ENCODE measurements at regions of chr19 and their contacts with region 1.

Region 1: DNA sequence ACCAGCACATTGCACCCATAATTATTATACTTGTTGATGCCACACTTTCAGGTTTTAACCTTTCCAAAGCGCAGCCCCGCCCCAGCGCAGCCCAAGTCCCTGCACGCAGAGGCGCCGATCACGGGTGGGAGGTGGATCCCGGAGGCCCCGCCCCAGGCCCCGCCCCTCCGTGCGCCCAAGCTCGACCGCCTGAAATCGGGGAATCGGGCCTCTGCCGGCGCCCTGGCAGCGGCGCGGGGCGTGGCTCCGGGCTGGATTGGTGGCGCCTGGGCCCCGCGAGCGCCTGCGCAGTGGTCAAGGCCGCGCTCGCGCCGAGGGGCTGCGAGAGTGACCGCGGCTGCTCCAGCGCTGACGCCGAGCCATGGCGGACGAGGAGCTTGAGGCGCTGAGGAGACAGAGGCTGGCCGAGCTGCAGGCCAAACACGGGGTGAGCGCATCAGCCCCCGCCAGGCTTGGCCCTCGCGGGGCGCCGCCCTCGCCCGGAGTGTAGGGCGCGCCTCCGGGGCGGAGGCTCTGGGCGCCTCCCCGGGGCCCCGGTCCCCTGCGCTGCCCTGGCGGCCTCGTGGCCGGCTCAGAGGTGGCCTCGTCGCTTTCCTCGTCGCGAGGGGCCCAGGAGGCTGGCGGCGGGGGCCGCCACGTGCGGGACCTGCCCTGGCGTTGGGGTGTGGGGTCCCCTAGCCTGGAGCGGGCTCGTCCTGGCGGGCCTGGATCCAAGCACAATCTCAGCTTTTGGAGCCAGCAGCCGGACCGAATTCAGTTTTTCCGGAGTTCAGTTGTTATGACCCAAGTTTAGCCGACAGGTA is at the start of gene PDCD5:
- DNase-seq: peak; percentile 51
- ATAC-seq: peak; percentile 95
- H3K4me3 ChIP-seq: peak within 1 kb of the TSS; percentile 83
- H3K27ac ChIP-seq: peak within 1 kb of the TSS; percentile 71
- H3K4me1 ChIP-seq: 0 out of 2 replicates have a peak, but pooled peaks cover 5% of the 10 kb centered on the region
- H3K27me3 ChIP-seq: no peaks in the 10 kb centered on the region
- CTCF ChIP-seq: no peak
- EP300 ChIP-seq: no peak
- POLR2A ChIP-seq: peak; percentile 95
- RAD21 ChIP-seq: no peak
- polyA plus RNA-seq, gene PDCD5: 124 to 260 TPM

Region 2: GRCh38 chr19:32345261-32346207 is 235.6 kb before region 1 on chr19 and contains the start of gene ZNF507:
- CTCF ChIA-PET with region 1: no interaction called
- POLR2A ChIA-PET with region 1: interaction called, 3 read pairs
- RAD21 ChIA-PET with region 1: no interaction called
- SMC1A ChIA-PET with region 1: no interaction called
- in situ Hi-C with region 1: no loop called
- intact Hi-C with region 1: loop called (anchors 5 kb)
- DNase-seq: no peak
- ATAC-seq: peak; percentile 93
- H3K4me3 ChIP-seq: peak within 1 kb of the TSS; percentile 81
- H3K27ac ChIP-seq: peak within 1 kb of the TSS; percentile 79
- H3K4me1 ChIP-seq: peaks cover 4% of the 10 kb centered on the region; the same call in 1 of the 2 replicates
- H3K27me3 ChIP-seq: no peaks in the 10 kb centered on the region
- CTCF ChIP-seq: 0 out of 6 replicates have a peak, but pooled peaks of 1 of the 3 experiments have one; percentile 6
- EP300 ChIP-seq: no peak
- POLR2A ChIP-seq: peak; percentile 62
- RAD21 ChIP-seq: no peak
- polyA plus RNA-seq, gene ZNF507: 2.3 to 2.7 TPM

Region 3: DNA sequence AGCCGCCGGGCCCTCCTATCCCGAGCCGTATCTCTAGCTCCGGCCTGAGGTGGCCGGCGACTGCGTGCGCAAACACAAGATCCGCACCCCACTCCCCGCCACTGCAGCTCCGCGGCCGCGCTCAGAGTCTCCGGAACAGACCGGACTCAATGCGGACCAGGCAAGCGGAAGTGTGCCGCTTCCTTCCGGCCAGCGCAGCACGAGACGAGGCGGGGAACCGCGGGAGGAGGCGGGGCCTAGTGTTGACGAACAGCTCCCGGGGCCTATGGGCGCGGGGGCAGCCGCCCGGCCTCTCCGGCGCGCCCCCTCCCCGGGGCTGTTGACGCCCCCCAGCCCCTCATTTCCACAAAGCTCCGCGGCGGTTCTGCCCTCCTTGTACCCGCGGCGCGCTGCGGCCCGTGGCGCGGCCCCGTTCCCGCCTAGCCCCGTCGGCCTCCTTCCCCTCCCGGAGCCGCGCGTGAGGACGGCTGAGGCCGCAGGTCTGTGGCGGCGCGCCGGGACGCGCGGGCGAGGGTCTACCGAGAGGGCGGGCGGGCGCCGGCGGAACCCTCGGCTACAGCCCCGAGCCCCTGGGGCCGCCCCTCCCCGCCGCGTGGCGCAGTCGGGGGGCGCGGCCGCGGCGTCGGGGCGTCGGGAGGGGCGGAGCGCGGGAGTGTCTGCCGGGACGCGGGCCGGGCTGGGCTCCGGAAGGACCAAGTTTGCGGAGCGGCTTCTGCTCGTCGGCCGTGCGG is 175.5 kb before region 1 on chr19 and contains the start of gene DPY19L3:
- CTCF ChIA-PET with region 1: no interaction called
- POLR2A ChIA-PET with region 1: no interaction called
- RAD21 ChIA-PET with region 1: no interaction called
- SMC1A ChIA-PET with region 1: no interaction called
- in situ Hi-C with region 1: loop called (anchors 10 kb)
- intact Hi-C with region 1: loop called (anchors 5 kb)
- DNase-seq: peak; percentile 59
- ATAC-seq: peak; percentile 97
- H3K4me3 ChIP-seq: peak within 1 kb of the TSS; percentile 97
- H3K27ac ChIP-seq: peak within 1 kb of the TSS; percentile 97
- H3K4me1 ChIP-seq: peaks cover 12% of the 10 kb centered on the region
- H3K27me3 ChIP-seq: no peaks in the 10 kb centered on the region
- CTCF ChIP-seq: no peak
- EP300 ChIP-seq: no peak
- POLR2A ChIP-seq: peak; percentile 99
- RAD21 ChIP-seq: no peak
- polyA plus RNA-seq, gene DPY19L3: 2.5 to 3.2 TPM

Region 4: GRCh38 chr19:32558607-32559228 is 22.4 kb before region 1 on chr19:
- CTCF ChIA-PET with region 1: no interaction called
- POLR2A ChIA-PET with region 1: no interaction called
- RAD21 ChIA-PET with region 1: no interaction called
- SMC1A ChIA-PET with region 1: no interaction called
- in situ Hi-C with region 1: no loop called
- intact Hi-C with region 1: no loop called
- DNase-seq: no peak
- ATAC-seq: no peak
- H3K4me3 ChIP-seq: no peak overlapping the region
- H3K27ac ChIP-seq: no peak overlapping the region
- H3K4me1 ChIP-seq: no peaks in the 10 kb centered on the region
- H3K27me3 ChIP-seq: no peaks in the 10 kb centered on the region
- CTCF ChIP-seq: no peak
- EP300 ChIP-seq: no peak
- POLR2A ChIP-seq: no peak
- RAD21 ChIP-seq: no peak

Region 5: GRCh38 chr19:32691291-32691951 is 110.3 kb after region 1 on chr19 and contains the start of gene NUDT19:
- CTCF ChIA-PET with region 1: no interaction called
- POLR2A ChIA-PET with region 1: no interaction called
- RAD21 ChIA-PET with region 1: no interaction called
- SMC1A ChIA-PET with region 1: no interaction called
- in situ Hi-C with region 1: no loop called
- intact Hi-C with region 1: loop called (anchors 2 kb)
- DNase-seq: peak; percentile 62
- ATAC-seq: peak; percentile 92
- H3K4me3 ChIP-seq: peak within 1 kb of the TSS; percentile 79
- H3K27ac ChIP-seq: peak within 1 kb of the TSS; percentile 69
- H3K4me1 ChIP-seq: peaks cover 6% of the 10 kb centered on the region; the same call in 1 of the 2 replicates
- H3K27me3 ChIP-seq: no peaks in the 10 kb centered on the region
- CTCF ChIP-seq: no peak
- EP300 ChIP-seq: no peak
- POLR2A ChIP-seq: peak; percentile 84
- RAD21 ChIP-seq: no peak
- polyA plus RNA-seq, gene NUDT19: 16.8 to 31.0 TPM

Region 6: GRCh38 chr19:32971715-32972540 is 390.8 kb after region 1 on chr19 and contains the starts of genes CEP89 and FAAP24:
- CTCF ChIA-PET with region 1: interaction called, 3 read pairs
- POLR2A ChIA-PET with region 1: no interaction called
- RAD21 ChIA-PET with region 1: no interaction called
- SMC1A ChIA-PET with region 1: no interaction called
- in situ Hi-C with region 1: no loop called
- intact Hi-C with region 1: loop called (anchors 10 kb)
- DNase-seq: peak; percentile 100
- ATAC-seq: peak; percentile 100
- H3K4me3 ChIP-seq: peak within 1 kb of the TSS; percentile 95
- H3K27ac ChIP-seq: peak within 1 kb of the TSS; percentile 82
- H3K4me1 ChIP-seq: 0 out of 2 replicates have a peak, but pooled peaks cover 3% of the 10 kb centered on the region
- H3K27me3 ChIP-seq: no peaks in the 10 kb centered on the region
- CTCF ChIP-seq: no peak
- EP300 ChIP-seq: no peak
- POLR2A ChIP-seq: peak; percentile 94
- RAD21 ChIP-seq: no peak
- polyA plus RNA-seq, gene CEP89: 7.9 to 8.7 TPM
- polyA plus RNA-seq, gene FAAP24: 15.8 to 17.4 TPM

Measured in GM12878 (cell line).